ENCODE measurements at regions of chr15 and their contacts with region 1.

Region 1: GRCh38 chr15:93030430-93031105 is 58.4 kb downstream of the RGMA start:
- DNase-seq: peak; percentile 67 to 75
- H3K4me3 ChIP-seq: peak overlapping the region in 1 of 3 donors; percentile 30
- H3K27ac ChIP-seq: peak overlapping the region; percentile 89 to 97
- H3K4me1 ChIP-seq: peaks cover 8 to 10% of the 10 kb centered on the region in 2 donors
- H3K27me3 ChIP-seq: no peaks in the 10 kb centered on the region
- CTCF ChIP-seq: peak; percentile 79 to 91 (median 84)
- POLR2A ChIP-seq: no peak

Region 2: DNA sequence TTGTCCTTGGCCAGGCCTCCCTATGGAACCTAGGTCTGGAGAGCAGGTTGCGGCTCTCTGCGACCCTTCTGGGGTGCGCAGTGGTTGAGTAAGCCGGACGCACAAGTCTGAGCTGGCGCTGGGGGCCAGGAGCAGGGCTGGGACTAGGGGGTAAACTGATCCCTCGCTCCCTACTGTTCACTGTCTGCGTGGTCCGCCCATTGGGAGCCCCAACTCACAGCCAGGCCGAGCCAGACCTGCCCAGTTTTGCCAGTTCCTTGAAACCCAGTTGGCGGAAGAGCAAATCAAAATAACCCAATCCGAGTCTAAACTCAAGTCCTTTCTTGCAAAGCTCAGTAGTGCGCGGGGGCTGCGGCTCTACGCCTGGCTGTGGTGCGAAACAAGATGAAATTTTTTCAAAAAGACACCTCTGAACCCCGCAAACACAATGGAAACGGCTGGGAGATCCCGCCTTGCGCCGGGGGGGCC is 40.9 kb after region 1 on chr15:
- intact Hi-C with region 1: loop called (anchors 2 kb)
- DNase-seq: no peak
- H3K4me3 ChIP-seq: peak overlapping the region; percentile 79 to 84 (median 82)
- H3K27ac ChIP-seq: peak overlapping the region; percentile 85 to 86
- H3K4me1 ChIP-seq: peaks cover 0 to 10% of the 10 kb centered on the region in 2 donors
- H3K27me3 ChIP-seq: no peaks in the 10 kb centered on the region
- CTCF ChIP-seq: no peak
- POLR2A ChIP-seq: no peak

Region 3: DNA sequence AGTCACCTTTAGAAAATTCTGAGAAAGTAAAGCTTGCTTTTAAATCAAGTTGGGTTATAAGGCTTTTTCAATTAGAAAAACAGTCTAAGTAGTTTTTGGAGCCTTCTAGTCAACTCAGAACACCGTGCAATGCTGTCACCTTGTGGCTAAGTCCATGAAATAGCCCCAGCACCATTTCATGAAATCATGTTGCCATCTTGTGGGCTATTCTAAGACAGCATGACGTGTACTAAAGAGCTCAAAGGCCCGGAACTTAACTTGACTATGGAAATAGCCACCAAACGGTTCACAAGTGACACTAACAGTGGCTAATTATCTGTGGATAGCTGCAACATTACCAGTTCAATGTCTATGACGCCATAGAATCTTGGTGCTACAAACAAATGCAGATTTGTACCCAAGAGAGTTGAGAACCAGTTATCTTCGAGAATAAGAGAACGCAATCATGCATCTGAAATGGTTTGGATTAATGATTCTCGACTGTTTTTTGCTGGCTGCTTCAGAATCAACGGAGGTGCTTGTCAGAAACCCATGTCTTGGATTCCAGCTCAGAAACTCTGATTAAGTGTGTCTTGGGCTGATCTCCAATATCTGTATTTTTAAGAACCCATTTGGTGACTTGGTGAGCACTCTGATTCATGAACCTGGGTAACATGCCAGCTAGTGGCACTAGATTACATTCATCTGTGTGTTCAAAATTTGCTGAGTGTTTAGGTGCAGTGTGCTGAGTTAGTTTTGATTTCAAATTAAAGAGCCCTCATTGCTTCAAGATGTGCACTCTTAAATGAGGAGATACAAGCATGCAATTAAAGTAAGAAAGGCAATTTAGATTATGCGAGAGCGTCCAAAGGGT is 1089.6 kb after region 1 on chr15:
- intact Hi-C with region 1: loop called (anchors 10 kb)
- DNase-seq: peak; percentile 53 to 67
- H3K4me3 ChIP-seq: no peak overlapping the region
- H3K27ac ChIP-seq: no peak overlapping the region
- H3K4me1 ChIP-seq: peaks cover 0 to 4% of the 10 kb centered on the region in 2 donors
- H3K27me3 ChIP-seq: no peaks in the 10 kb centered on the region
- CTCF ChIP-seq: peak; percentile 71 to 99 (median 97)
- POLR2A ChIP-seq: no peak